Activated CD4-positive, alpha-beta T cell treated with anti-CD3 and anti-CD28 coated beads, Interleukin-2, amount 10 ng/mL, durations not matched to agents 24 days and 14 days (primary cell): ENCODE measurements at regions of chr22 and their contacts with region 1.

Region 1: GRCh38 chr22:37121887-37122591 is 12.5 kb upstream of the TMPRSS6 start:
- DNase-seq: peak; percentile 98
- H3K4me3 Mint-ChIP-seq: peak overlapping the region; percentile 81
- H3K27ac Mint-ChIP-seq: peak overlapping the region; percentile 98
- H3K4me1 Mint-ChIP-seq: peaks cover 74% of the 10 kb centered on the region
- H3K27me3 Mint-ChIP-seq: no peaks in the 10 kb centered on the region

Region 2: GRCh38 chr22:36211237-36211861 is 910.7 kb before region 1 on chr22:
- intact Hi-C with region 1: no loop called
- DNase-seq: no peak
- H3K4me3 Mint-ChIP-seq: no peak overlapping the region
- H3K27ac Mint-ChIP-seq: no peak overlapping the region
- H3K4me1 Mint-ChIP-seq: peaks cover 5% of the 10 kb centered on the region
- H3K27me3 Mint-ChIP-seq: peaks cover 63% of the 10 kb centered on the region

Region 3: GRCh38 chr22:37095113-37095512 is 26.9 kb before region 1 on chr22:
- intact Hi-C with region 1: loop called (anchors 1 kb)
- DNase-seq: peak; percentile 67
- H3K4me3 Mint-ChIP-seq: peak overlapping the region; percentile 24
- H3K27ac Mint-ChIP-seq: peak overlapping the region; percentile 42
- H3K4me1 Mint-ChIP-seq: peaks cover 30% of the 10 kb centered on the region
- H3K27me3 Mint-ChIP-seq: no peaks in the 10 kb centered on the region

Region 4: DNA sequence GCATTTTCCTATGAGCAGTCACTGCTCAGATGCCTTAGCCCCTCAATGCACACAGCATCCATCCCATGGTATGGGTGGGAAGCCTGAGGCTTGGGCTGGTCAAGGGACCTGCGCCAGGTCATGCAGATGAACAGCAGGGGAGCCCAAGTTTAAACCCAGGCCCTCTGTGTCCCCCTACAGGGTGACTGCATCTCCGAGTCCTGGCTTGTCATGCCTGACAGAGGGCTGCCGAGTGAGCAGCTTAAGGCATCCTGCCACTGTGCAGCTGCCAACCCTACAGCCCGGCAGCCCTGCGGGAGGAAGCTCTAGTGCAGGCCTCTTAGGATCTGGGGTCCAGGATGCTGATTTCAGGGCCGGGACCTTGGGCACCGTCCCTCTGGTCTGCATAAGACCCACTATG is 17.7 kb after region 1 on chr22:
- intact Hi-C with region 1: loop called (anchors 1 kb)
- DNase-seq: no peak
- H3K4me3 Mint-ChIP-seq: no peak overlapping the region
- H3K27ac Mint-ChIP-seq: peak overlapping the region; percentile 97
- H3K4me1 Mint-ChIP-seq: peaks cover 54% of the 10 kb centered on the region
- H3K27me3 Mint-ChIP-seq: no peaks in the 10 kb centered on the region

Region 5: GRCh38 chr22:37166675-37167066 is 44.6 kb after region 1 on chr22:
- intact Hi-C with region 1: loop called (anchors 1 kb)
- DNase-seq: peak; percentile 94
- H3K4me3 Mint-ChIP-seq: peak overlapping the region; percentile 69
- H3K27ac Mint-ChIP-seq: peak overlapping the region; percentile 78
- H3K4me1 Mint-ChIP-seq: peaks cover 69% of the 10 kb centered on the region
- H3K27me3 Mint-ChIP-seq: peaks cover 2% of the 10 kb centered on the region